ENCODE measurements at regions of chr10 and their contacts with region 1.

Region 1: DNA sequence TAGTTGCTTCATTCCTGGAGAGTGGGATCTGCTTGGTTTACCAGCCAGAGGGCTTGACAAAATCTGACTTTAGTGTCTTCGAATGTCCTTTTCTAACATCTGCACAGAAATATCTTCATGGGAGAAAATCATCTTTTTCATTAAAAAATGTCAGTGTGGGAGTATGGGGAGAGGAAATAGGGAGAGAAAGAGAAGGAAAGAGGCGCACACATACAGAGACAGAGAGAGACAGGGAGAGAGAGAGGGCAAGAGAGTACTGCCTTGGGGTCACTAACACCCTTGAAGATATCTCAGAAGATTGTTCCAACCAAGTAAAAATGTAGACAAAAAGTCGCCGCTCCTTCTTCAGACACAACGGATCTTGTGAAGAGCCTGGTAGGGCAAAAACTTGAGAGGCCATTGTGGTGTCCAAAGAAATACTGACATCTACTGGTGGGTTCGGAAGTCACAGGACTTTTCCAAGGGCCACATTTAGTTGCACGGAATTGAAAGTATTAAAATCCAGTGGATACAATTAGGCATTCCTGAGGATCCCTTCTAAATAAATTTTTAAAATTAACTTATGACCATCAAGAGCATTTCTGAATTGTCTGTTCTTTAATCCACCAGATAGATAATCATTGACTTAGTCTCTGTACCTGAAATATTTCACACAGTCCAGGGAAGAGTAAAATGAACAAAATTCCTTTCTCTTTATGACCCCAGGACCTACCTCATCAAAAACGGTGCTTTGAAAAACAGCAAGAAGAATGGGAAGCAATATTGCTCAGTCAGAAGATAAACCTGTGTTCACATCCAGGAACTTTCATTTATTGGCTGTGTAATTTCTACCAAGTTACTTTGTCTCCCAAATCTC is 29.7 kb downstream of the VIM start:
- DNase-seq: peak in 4 of 10 donors; percentile 32 to 76 (median 38)

Region 2: GRCh38 chr10:16828114-16828568 is 429.6 kb before region 1 on chr10:
- intact Hi-C with region 1: loop called (anchors 1 kb)
- DNase-seq: peak in 5 of 10 donors; percentile 19 to 83 (median 39)

Region 3: DNA sequence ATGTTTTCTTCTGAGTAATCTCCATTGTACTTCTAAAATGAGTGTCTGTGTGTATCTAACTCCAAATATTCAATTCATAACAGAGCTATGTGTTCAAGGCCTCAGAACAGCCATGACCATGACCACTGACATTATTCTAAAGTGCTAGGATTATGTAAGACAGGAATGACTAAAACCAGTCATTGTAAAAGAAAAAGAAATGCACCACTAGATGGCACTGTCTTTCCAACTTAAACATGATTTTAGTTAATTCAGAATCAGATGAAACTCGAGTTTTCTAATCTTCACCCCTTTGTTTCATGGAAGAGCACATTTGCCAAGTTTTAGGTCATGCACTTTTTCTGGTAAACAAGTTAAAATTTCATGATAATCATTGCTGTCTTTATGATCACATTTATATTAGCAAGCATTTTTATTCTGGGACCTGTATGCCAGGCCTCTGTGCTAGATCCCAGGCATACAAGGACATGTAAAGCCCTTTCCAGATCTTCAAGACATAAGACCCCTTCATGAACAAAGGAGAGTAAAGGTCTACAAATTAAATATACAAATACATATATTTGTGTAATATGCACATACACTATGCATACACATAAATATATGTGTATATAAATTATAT is 414.3 kb before region 1 on chr10:
- intact Hi-C with region 1: loop called (anchors 1 kb)
- DNase-seq: no peak

Region 4: DNA sequence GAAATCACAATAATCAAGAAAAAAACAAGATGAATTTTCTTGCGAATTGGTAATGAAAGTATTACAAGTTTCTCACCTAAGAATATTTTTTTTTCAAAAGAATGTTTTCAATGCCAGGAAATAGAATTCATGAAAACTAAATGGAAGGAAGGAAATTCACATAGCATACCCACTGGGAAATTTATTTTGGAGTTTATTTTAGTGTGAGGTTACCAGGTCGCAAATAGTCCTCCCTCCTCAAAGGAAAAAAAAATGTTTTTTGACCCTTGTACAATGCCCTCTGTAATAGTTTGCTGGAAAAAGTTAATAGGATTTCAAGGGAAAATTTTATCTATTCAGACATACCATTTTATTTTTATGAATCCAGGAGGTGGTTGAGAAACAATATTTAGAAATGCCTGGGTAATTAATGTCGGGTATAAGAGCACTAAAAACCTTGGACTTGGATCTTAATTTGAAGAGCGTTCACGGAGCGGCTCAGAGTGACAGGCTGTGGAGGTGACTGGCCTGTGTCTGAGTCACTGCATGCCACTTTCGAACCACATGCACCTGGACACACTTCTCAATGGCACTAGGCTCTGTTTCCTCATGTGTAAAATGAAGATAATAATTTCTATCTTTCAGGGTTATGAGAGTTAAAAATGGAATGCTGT is 156.3 kb before region 1 on chr10:
- intact Hi-C with region 1: no loop called
- DNase-seq: peak in 1 of 10 donors; percentile 30

Region 5: DNA sequence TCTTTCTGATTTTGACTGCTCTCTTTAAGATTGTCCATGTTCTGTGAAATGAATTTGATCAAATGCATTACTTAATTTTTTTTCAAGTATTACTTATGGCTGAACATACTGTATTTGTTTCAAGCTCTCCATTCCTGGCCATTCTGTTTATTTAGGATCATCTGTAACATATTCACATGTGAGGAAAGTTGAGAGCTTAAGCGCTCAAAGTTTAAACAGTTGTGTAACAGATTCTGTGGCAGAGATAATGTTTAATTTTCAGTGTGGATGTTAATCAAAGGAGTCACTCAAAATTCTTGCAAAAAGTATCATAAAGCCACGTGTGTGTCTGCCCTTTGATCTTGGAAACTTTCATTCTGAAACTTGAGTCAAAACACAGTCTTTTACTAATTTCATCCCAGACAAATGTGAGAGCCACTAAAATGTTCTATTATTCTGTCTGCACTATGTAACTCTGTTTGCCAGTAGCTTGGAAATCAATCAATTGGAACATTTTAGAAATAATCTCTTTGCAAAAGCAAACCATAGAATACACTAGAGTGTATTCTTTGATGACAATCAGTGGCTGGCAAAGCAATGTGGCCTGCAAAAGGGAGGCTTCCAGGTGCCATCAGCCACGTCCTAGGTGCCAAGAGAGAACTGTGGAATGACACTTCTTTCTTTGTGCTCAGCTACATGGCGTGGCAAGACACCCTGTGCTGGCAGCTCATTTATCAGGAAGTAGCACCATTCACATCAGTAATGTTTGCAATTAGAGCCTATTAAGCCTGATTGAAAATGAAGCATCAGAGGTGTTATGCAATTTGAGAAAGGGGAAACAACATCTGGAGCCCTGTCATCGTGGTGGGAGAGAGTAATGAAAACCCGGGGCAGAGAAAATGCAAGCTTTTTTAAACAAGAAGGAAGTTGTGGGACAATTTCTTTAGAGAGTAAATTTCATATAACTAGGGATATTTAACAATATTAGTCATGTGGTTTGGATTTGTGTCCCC is 1442.5 kb after region 1 on chr10:
- intact Hi-C with region 1: no loop called
- DNase-seq: no peak